Mammary epithelial cell (primary cell): ENCODE measurements at regions of chr13 and their contacts with region 1.

Region 1: GRCh38 chr13:20192158-20192835 is 441 bp downstream of the GJB2 start:
- DNase-seq: peak; percentile 56
- H3K4me3 ChIP-seq: peak overlapping the region; percentile 53 to 64 (median 64)
- H3K27ac ChIP-seq: peak overlapping the region; percentile 74
- H3K4me1 ChIP-seq: peaks cover 44% of the 10 kb centered on the region
- H3K27me3 ChIP-seq: no peaks in the 10 kb centered on the region
- CTCF ChIP-seq: no peak

Region 2: GRCh38 chr13:20128467-20128931 is 63.8 kb before region 1 on chr13:
- CTCF ChIA-PET with region 1: no interaction called
- dilution Hi-C with region 1: no loop called
- in situ Hi-C with region 1: no loop called
- intact Hi-C with region 1: no loop called
- DNase-seq: no peak
- H3K4me3 ChIP-seq: peak overlapping the region in 1 of 3 experiments; percentile 62
- H3K27ac ChIP-seq: no peak overlapping the region
- H3K4me1 ChIP-seq: peaks cover 20% of the 10 kb centered on the region
- H3K27me3 ChIP-seq: no peaks in the 10 kb centered on the region
- CTCF ChIP-seq: peak in 1 of 2 donors; percentile 60

Region 3: DNA sequence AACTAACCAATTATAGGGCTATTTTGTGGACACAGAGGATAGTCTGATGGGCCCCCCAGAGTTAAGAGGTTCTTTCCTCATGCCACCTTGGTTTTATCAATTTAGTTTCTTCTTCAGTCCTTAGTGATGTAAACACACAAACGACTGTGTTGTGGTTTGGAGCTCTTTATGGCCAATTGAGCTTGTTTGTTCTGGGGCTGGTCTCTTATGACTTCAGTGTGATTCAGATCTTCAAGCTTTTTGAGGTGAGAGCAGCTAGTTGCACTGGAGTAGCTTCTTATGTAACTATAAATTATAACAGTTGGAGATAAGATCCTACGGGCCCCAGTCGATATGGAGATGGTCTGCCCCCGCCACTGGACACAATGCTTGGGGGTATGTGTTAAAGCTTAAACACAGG is 61.8 kb after region 1 on chr13:
- CTCF ChIA-PET with region 1: no interaction called
- dilution Hi-C with region 1: loop called (anchors 5 kb)
- in situ Hi-C with region 1: no loop called
- intact Hi-C with region 1: no loop called
- DNase-seq: no peak
- H3K4me3 ChIP-seq: no peak overlapping the region
- H3K27ac ChIP-seq: no peak overlapping the region
- H3K4me1 ChIP-seq: no peaks in the 10 kb centered on the region
- H3K27me3 ChIP-seq: no peaks in the 10 kb centered on the region
- CTCF ChIP-seq: no peak

Region 4: GRCh38 chr13:20369886-20370361 is 177.6 kb after region 1 on chr13:
- CTCF ChIA-PET with region 1: no interaction called
- dilution Hi-C with region 1: loop called (anchors 5 kb)
- in situ Hi-C with region 1: no loop called
- intact Hi-C with region 1: no loop called
- DNase-seq: no peak
- H3K4me3 ChIP-seq: no peak overlapping the region
- H3K27ac ChIP-seq: peak overlapping the region; percentile 57
- H3K4me1 ChIP-seq: peaks cover 18% of the 10 kb centered on the region
- H3K27me3 ChIP-seq: no peaks in the 10 kb centered on the region
- CTCF ChIP-seq: no peak

Region 5: GRCh38 chr13:20495082-20496023 is 303.1 kb after region 1 on chr13:
- CTCF ChIA-PET with region 1: no interaction called
- dilution Hi-C with region 1: loop called (anchors 5 kb)
- in situ Hi-C with region 1: no loop called
- intact Hi-C with region 1: no loop called
- DNase-seq: peak; percentile 56
- H3K4me3 ChIP-seq: no peak overlapping the region
- H3K27ac ChIP-seq: no peak overlapping the region
- H3K4me1 ChIP-seq: peaks cover 10% of the 10 kb centered on the region
- H3K27me3 ChIP-seq: no peaks in the 10 kb centered on the region
- CTCF ChIP-seq: peak; percentile 91 to 98

Region 6: GRCh38 chr13:20566898-20567874 is 374.9 kb after region 1 on chr13 and contains the start of gene IFT88:
- CTCF ChIA-PET with region 1: no interaction called
- dilution Hi-C with region 1: no loop called
- in situ Hi-C with region 1: no loop called
- intact Hi-C with region 1: loop called (anchors 5 kb)
- DNase-seq: peak; percentile 83
- H3K4me3 ChIP-seq: peak within 1 kb of the TSS; percentile 71 to 89 (median 89)
- H3K27ac ChIP-seq: peak within 1 kb of the TSS; percentile 89
- H3K4me1 ChIP-seq: peaks cover 8% of the 10 kb centered on the region
- H3K27me3 ChIP-seq: no peaks in the 10 kb centered on the region
- CTCF ChIP-seq: no peak
- total RNA-seq, gene IFT88: 10.3 to 11.2 TPM

Region 7: DNA sequence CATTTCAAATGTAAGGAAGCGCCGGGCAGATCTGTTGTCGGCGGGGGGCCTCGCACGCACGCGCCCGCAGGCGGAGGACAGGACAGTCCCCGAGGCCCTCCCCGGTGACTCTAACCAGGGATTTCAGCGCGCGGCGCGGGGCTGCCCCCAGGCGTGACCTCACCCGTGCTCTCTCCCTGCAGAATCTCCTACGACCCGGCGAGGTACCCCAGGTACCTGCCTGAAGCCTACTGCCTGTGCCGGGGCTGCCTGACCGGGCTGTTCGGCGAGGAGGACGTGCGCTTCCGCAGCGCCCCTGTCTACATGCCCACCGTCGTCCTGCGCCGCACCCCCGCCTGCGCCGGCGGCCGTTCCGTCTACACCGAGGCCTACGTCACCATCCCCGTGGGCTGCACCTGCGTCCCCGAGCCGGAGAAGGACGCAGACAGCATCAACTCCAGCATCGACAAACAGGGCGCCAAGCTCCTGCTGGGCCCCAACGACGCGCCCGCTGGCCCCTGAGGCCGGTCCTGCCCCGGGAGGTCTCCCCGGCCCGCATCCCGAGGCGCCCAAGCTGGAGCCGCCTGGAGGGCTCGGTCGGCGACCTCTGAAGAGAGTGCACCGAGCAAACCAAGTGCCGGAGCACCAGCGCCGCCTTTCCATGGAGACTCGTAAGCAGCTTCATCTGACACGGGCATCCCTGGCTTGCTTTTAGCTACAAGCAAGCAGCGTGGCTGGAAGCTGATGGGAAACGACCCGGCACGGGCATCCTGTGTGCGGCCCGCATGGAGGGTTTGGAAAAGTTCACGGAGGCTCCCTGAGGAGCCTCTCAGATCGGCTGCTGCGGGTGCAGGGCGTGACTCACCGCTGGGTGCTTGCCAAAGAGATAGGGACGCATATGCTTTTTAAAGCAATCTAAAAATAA is 529.4 kb after region 1 on chr13:
- CTCF ChIA-PET with region 1: no interaction called
- dilution Hi-C with region 1: no loop called
- in situ Hi-C with region 1: no loop called
- intact Hi-C with region 1: loop called (anchors 5 kb)
- DNase-seq: peak; percentile 31
- H3K4me3 ChIP-seq: peak overlapping the region; percentile 3 to 51 (median 47)
- H3K27ac ChIP-seq: no peak overlapping the region
- H3K4me1 ChIP-seq: peaks cover 11% of the 10 kb centered on the region
- H3K27me3 ChIP-seq: peaks cover 2% of the 10 kb centered on the region
- CTCF ChIP-seq: peak in 1 of 2 donors; percentile 4